HEK293 (cell line): ENCODE measurements at regions of chr6 and their contacts with region 1.

Region 1: GRCh38 chr6:159174263-159174969 is 5.2 kb downstream of the FNDC1 start:
- H3K4me3 ChIP-seq: no peak overlapping the region
- H3K27ac ChIP-seq: no peak overlapping the region
- H3K4me1 ChIP-seq: no peaks in the 10 kb centered on the region
- CTCF ChIP-seq: peak; percentile 57; the same call in 1 of the 2 replicates

Region 2: DNA sequence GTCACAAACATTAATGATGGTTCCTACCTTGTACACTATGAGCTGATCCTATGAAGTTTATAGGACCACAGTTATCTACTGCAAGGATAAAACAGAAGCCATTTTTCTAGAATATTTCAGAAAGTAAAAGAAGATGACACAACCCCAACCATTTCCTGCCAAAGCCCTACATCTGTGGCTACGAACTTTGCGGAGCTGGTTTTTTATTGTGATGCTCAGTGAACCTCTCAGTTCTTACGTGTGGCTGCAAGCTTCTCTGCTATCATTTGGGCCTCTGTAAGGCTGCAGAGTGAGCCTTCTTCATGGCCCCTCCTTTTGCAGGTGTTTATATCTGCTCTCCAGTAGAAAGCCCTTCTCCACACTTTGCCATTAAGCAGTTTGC is 111.9 kb before region 1 on chr6:
- CTCF ChIA-PET with region 1: no interaction called
- POLR2A ChIA-PET with region 1: no interaction called
- H3K4me3 ChIP-seq: no peak overlapping the region
- H3K27ac ChIP-seq: no peak overlapping the region
- H3K4me1 ChIP-seq: no peaks in the 10 kb centered on the region
- CTCF ChIP-seq: no peak

Region 3: DNA sequence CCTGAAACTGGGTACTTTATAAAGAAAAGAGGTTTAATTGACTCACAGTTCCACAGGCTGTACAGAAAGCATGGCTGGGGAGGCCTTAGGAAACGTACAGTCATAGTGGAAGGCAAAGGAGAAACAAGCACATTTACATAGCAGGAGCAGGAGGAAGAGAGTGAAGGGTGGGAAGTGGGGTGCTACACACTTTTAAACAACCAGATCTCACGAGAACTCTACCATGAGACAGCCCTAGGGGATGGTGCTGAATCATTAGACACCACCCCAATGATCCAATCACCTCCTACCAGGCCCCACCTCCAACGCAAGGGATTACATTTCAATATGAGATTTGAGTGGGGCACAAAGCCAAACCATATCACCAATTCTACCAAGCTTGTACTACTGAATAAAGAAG is 12.6 kb before region 1 on chr6:
- CTCF ChIA-PET with region 1: interaction called, 10 read pairs
- POLR2A ChIA-PET with region 1: no interaction called
- H3K4me3 ChIP-seq: no peak overlapping the region
- H3K27ac ChIP-seq: no peak overlapping the region
- H3K4me1 ChIP-seq: no peaks in the 10 kb centered on the region
- CTCF ChIP-seq: no peak

Region 4: GRCh38 chr6:159184559-159184958 is 10.1 kb after region 1 on chr6:
- CTCF ChIA-PET with region 1: interaction called, 26 read pairs
- POLR2A ChIA-PET with region 1: no interaction called
- H3K4me3 ChIP-seq: no peak overlapping the region
- H3K27ac ChIP-seq: no peak overlapping the region
- H3K4me1 ChIP-seq: no peaks in the 10 kb centered on the region
- CTCF ChIP-seq: no peak

Region 5: DNA sequence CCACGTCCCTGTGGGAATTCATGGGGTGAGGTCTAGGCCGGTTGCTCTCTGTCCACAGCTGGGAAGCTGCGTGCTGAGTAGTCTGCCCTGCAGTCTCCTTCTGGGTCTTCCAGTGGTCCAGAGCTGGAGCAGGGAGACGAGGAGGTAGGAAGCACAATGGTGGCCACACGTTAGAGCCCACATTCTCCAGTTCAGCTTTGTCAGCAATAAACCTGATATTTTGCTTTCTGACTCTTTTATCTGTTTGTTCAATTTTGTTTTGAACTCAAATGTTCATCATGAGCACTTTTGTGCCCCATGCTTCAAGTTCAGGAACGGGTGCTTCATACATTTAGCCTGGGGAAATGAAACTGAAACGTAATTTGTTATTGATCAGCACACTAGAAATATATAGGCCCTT is 16.0 kb after region 1 on chr6:
- CTCF ChIA-PET with region 1: interaction called, 26 read pairs
- POLR2A ChIA-PET with region 1: no interaction called
- H3K4me3 ChIP-seq: no peak overlapping the region
- H3K27ac ChIP-seq: no peak overlapping the region
- H3K4me1 ChIP-seq: no peaks in the 10 kb centered on the region
- CTCF ChIP-seq: no peak

Region 6: GRCh38 chr6:159463119-159463829 is 288.9 kb after region 1 on chr6:
- CTCF ChIA-PET with region 1: interaction called, 63 read pairs
- POLR2A ChIA-PET with region 1: no interaction called
- H3K4me3 ChIP-seq: no peak overlapping the region
- H3K27ac ChIP-seq: no peak overlapping the region
- H3K4me1 ChIP-seq: peaks cover 5% of the 10 kb centered on the region; the same call in 1 of the 2 replicates
- CTCF ChIP-seq: no peak

Region 7: DNA sequence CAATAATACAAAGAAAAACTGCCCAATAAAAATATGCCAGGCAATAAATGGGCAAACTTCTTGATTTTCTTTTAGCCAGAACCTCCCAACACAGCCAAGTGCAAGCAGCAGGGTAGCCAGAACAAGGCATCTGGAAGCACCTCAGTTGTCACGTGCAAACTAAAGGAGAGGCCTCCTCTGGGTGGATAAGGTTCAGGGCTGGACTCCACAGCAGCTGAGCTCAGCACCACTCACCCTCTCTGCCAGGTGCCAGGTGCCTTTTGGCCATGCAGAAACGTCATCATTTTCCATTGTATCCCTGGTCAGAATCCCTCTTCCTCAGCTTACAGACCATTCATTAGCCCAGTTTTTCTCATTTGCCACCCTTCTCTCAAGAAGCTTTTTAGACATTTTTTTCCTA is 465.9 kb after region 1 on chr6:
- CTCF ChIA-PET with region 1: interaction called, 12 read pairs
- POLR2A ChIA-PET with region 1: no interaction called
- H3K4me3 ChIP-seq: no peak overlapping the region
- H3K27ac ChIP-seq: no peak overlapping the region
- H3K4me1 ChIP-seq: peaks cover 7% of the 10 kb centered on the region; the same call in 1 of the 2 replicates
- CTCF ChIP-seq: no peak

Region 8: GRCh38 chr6:159654483-159655098 is 480.2 kb after region 1 on chr6:
- CTCF ChIA-PET with region 1: interaction called, 130 read pairs
- POLR2A ChIA-PET with region 1: no interaction called
- H3K4me3 ChIP-seq: no peak overlapping the region
- H3K27ac ChIP-seq: no peak overlapping the region
- H3K4me1 ChIP-seq: no peaks in the 10 kb centered on the region
- CTCF ChIP-seq: peak; percentile 44; the same call in 1 of the 2 replicates